ENCODE measurements at regions of chr12 and their contacts with region 1.

Region 1: DNA sequence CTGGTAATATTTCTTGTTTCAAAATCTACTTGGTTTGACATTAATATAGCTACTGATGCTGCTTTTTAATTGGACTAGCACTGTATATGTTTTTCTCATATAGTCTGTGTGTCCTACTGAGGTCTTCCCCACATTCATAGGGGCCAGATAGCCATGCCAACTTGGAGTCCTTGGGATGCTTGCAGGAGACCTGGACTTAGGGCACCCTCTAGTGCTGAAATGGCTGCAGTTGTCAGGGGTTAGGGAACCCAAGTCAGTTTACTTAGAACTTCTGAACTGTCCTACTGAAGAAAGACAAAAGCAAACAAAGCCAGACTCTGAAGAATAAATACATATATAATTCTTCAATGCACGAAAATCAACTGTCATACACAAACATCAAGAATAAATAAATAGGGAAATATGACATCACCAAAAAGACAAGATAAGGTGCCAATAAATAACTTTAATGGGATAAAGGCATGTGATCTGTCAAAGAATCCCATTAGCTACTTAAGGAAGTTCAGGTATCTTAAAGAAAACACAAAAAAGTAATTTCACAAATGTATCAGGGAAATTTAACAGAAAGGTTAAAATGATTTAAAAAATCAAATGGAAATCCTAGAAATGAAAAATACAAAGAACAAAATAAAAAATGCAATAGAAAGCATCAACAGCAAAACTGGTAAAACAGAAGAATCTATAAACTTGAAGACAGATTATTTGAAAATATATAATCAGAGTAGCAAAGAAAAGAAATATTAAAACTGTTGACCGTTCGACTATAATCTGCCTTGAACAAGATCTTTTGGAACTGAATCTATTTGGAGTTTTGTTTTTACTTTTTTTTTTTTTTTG is 279.7 kb upstream of the SYT1 start:
- DNase-seq: peak; percentile 6
- ATAC-seq: no peak
- H3K4me3 ChIP-seq: no peak overlapping the region
- H3K27ac ChIP-seq: no peak overlapping the region
- H3K4me1 ChIP-seq: no peaks in the 10 kb centered on the region
- H3K27me3 ChIP-seq: no peaks in the 10 kb centered on the region
- CTCF ChIP-seq: peak; percentile 13; the same call in 1 of the 2 replicates
- POLR2A ChIP-seq: no peak
- RAD21 ChIP-seq: peak; percentile 41; the same call in 1 of the 2 replicates

Region 2: GRCh38 chr12:78146365-78146772 is 438.5 kb before region 1 on chr12:
- CTCF ChIA-PET with region 1: no interaction called
- POLR2A ChIA-PET with region 1: no interaction called
- dilution Hi-C with region 1: no loop called
- in situ Hi-C with region 1: no loop called
- intact Hi-C with region 1: loop called (anchors 10 kb)
- DNase-seq: peak; percentile 62
- ATAC-seq: peak; percentile 70; the same call in 1 of the 2 replicates
- H3K4me3 ChIP-seq: no peak overlapping the region
- H3K27ac ChIP-seq: no peak overlapping the region
- H3K4me1 ChIP-seq: no peaks in the 10 kb centered on the region
- H3K27me3 ChIP-seq: no peaks in the 10 kb centered on the region
- CTCF ChIP-seq: peak; percentile 67
- POLR2A ChIP-seq: no peak
- RAD21 ChIP-seq: peak; percentile 58

Region 3: DNA sequence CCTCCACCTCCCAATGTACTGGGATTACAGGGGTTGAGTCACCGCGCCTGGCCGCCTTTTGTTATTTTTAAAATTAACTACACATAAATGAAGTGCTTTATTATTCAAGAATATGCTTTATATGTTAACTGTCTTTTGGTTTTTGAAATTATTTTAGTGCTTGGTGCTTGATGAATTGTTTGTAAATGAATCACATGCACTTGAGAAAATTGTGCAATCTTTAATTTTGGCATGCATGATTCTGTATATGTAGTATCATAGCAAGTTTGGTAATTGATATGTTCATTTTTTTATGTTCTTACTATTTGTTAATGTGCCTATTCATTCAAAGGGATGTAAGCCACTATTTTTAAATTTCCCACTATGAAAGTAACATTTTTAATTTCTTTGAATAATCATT is 313.4 kb before region 1 on chr12:
- CTCF ChIA-PET with region 1: no interaction called
- POLR2A ChIA-PET with region 1: no interaction called
- dilution Hi-C with region 1: no loop called
- in situ Hi-C with region 1: no loop called
- intact Hi-C with region 1: no loop called
- DNase-seq: peak; percentile 10
- ATAC-seq: no peak
- H3K4me3 ChIP-seq: no peak overlapping the region
- H3K27ac ChIP-seq: no peak overlapping the region
- H3K4me1 ChIP-seq: no peaks in the 10 kb centered on the region
- H3K27me3 ChIP-seq: no peaks in the 10 kb centered on the region
- CTCF ChIP-seq: no peak
- POLR2A ChIP-seq: no peak
- RAD21 ChIP-seq: no peak

Measured in IMR-90 (cell line).